Cardiac septum (tissue), 1 donor: ENCODE measurements at regions of chr11 and their contacts with region 1.

Region 1: GRCh38 chr11:120303004-120303637 is 22.0 kb upstream of the TLCD5 start:
- DNase-seq: no peak

Region 2: GRCh38 chr11:119728651-119729580 is 574.2 kb before region 1 on chr11 and contains the start of gene NECTIN1:
- intact Hi-C with region 1: loop called (anchors 10 kb)
- DNase-seq: peak; percentile 94
- total RNA-seq, gene NECTIN1: 10.4 TPM

Region 3: GRCh38 chr11:120172054-120172911 is 130.8 kb before region 1 on chr11:
- intact Hi-C with region 1: loop called (anchors 2 kb)
- DNase-seq: peak; percentile 74

Region 4: DNA sequence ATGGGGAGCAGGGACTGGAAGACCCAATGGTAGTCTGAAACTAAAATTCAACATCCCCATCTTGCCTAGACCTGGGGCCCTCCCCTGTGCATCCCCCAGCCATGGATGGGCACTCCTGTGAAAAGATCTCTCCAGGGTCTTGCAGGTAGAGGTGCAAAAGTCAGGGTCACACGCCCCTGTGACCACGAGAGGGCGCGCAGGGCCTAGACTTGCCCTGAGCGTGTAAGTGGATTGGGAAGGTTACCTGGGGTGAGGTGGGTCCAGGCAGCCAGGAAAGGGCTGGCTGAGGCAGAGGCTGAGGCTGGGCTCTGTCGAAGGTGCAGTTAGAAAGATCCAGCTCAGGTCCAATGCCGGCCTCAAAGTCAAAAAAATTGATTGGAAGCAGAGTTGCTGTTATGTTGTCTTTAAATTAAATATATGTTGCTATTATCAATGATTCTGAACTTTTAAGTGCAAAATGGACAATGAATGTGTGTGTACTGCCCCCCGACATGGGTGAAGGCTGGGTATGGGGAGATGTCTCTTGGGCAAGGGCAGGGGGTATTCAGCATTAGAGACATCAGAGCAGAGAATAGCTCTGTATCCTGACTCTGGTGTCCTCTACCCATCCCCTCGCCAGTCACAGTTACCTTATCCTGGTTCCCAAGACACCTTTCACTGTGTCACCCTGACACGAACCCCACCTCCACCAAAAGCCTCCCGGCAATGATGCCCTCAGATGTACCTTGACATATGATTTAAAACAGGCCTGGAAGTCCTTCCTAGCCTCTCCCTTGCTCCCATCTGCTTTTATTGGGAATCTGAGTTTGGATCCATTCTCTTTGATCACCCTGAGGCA is 67.9 kb before region 1 on chr11:
- intact Hi-C with region 1: loop called (anchors 1 kb)
- DNase-seq: no peak

Region 5: GRCh38 chr11:120324932-120325810 is 22.1 kb after region 1 on chr11 and contains the start of gene TLCD5:
- intact Hi-C with region 1: no loop called
- DNase-seq: no peak
- total RNA-seq, gene TLCD5: 16.6 TPM